Activated T-helper 1 cell treated with anti-CD3 and anti-CD28 coated beads, Interleukin-12 subunit alpha, Interleukin-12 subunit beta, Interleukin-2, Interleukin-4 antibody, amounts not matched to agents 30 ng/mL and 10 ng/mL and 1 ng/mL, durations not matched to agents 14 hours and 24 hours and 36 hours (primary cell): ENCODE measurements at regions of chr2 and their contacts with region 1.

Region 1: DNA sequence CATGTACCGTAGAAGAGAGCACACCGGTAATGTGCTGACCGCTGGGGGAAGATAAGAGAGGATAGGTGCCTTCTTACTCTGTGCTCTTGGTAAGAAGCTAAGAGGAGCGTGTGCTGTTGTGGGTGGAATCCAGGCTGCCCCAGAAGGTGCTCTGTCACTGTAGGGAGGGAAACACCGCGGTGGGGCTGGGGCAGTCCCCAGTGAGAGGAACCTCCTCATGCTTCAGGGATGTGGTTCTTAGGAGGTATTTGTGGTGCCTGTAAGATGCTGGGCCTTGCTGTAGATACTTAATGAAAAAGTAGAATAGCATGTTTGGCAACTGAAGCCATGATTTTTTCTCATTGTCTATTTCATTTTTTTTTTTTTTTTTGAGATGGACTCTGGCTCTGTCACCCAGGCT is 1.1 kb downstream of the COLEC11 start:
- DNase-seq: no peak
- H3K4me3 Mint-ChIP-seq: no peak overlapping the region
- H3K27ac Mint-ChIP-seq: no peak overlapping the region
- H3K4me1 Mint-ChIP-seq: peaks cover 30% of the 10 kb centered on the region
- H3K27me3 Mint-ChIP-seq: peaks cover 12% of the 10 kb centered on the region

Region 2: GRCh38 chr2:3575534-3576262 is 20.3 kb before region 1 on chr2:
- intact Hi-C with region 1: loop called (anchors 2 kb)
- DNase-seq: peak; percentile 17
- H3K4me3 Mint-ChIP-seq: peak overlapping the region; percentile 99
- H3K27ac Mint-ChIP-seq: peak overlapping the region; percentile 91
- H3K4me1 Mint-ChIP-seq: peaks cover 54% of the 10 kb centered on the region
- H3K27me3 Mint-ChIP-seq: peaks cover 1% of the 10 kb centered on the region

Region 3: GRCh38 chr2:3624059-3624794 is 28.2 kb after region 1 on chr2:
- intact Hi-C with region 1: no loop called
- DNase-seq: no peak
- H3K4me3 Mint-ChIP-seq: no peak overlapping the region
- H3K27ac Mint-ChIP-seq: no peak overlapping the region
- H3K4me1 Mint-ChIP-seq: no peaks in the 10 kb centered on the region
- H3K27me3 Mint-ChIP-seq: peaks cover 9% of the 10 kb centered on the region